Activated CD8-positive, alpha-beta T cell treated with anti-CD3 and anti-CD28 coated beads, Interleukin-2, amount 10 ng/mL, durations not matched to agents 7 days and 5 days (primary cell): ENCODE measurements at regions of chr9 and their contacts with region 1.

Region 1: GRCh38 chr9:98998441-98999151 is 54.9 kb downstream of the COL15A1 start:
- DNase-seq: peak; percentile 68
- ATAC-seq: peak; percentile 73
- H3K4me3 Mint-ChIP-seq: no peak overlapping the region
- H3K27ac Mint-ChIP-seq: no peak overlapping the region
- H3K4me1 Mint-ChIP-seq: peaks cover 35% of the 10 kb centered on the region
- H3K27me3 Mint-ChIP-seq: peaks cover 25% of the 10 kb centered on the region

Region 2: DNA sequence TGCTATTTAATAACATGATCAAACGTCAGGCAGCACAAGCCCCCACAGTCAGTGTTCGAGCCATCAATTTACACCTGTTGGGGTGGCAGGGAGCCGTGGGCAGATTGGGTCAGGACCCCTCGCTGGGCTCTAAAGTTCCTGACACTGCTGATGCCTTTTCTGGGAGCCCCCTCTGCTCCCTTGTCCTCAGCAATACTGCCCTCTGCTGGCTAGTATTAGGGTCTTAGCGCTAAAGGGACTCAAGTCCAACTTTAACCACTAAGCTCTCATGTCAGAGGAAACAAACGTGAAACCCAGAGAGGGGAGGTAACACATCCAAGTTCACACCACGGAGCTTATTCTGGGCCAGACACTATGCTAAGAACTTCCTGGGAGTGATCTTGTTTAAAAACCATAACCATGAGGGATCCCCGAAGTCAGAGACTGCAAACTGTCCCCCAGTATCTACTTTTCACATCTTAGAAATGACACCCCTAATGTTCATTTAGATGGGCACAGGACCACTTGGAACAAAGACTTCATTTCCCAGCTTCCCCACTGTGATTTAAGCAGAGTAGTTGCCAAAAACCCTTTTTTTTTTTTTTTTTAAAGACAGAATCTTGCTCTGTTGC is 222.7 kb before region 1 on chr9:
- CTCF ChIA-PET with region 1: no interaction called
- POLR2A ChIA-PET with region 1: no interaction called
- DNase-seq: peak; percentile 64
- ATAC-seq: peak; percentile 51
- H3K4me3 Mint-ChIP-seq: no peak overlapping the region
- H3K27ac Mint-ChIP-seq: peak overlapping the region; percentile 26
- H3K4me1 Mint-ChIP-seq: no peaks in the 10 kb centered on the region
- H3K27me3 Mint-ChIP-seq: no peaks in the 10 kb centered on the region

Region 3: GRCh38 chr9:98807070-98807810 is 191.4 kb before region 1 on chr9 and contains the start of gene GALNT12:
- CTCF ChIA-PET with region 1: interaction called, 22 read pairs
- POLR2A ChIA-PET with region 1: no interaction called
- DNase-seq: peak; percentile 64
- ATAC-seq: peak; percentile 83
- H3K4me3 Mint-ChIP-seq: peak within 1 kb of the TSS; percentile 82
- H3K27ac Mint-ChIP-seq: peak within 1 kb of the TSS; percentile 9
- H3K4me1 Mint-ChIP-seq: peaks cover 35% of the 10 kb centered on the region
- H3K27me3 Mint-ChIP-seq: peaks cover 28% of the 10 kb centered on the region
- total RNA-seq, gene GALNT12: 7.9 to 8.8 TPM

Region 4: GRCh38 chr9:98974994-98975712 is 23.4 kb before region 1 on chr9:
- CTCF ChIA-PET with region 1: interaction called, 21 read pairs
- POLR2A ChIA-PET with region 1: no interaction called
- DNase-seq: peak; percentile 87
- ATAC-seq: peak; percentile 96
- H3K4me3 Mint-ChIP-seq: peak overlapping the region; percentile 4
- H3K27ac Mint-ChIP-seq: no peak overlapping the region
- H3K4me1 Mint-ChIP-seq: peaks cover 16% of the 10 kb centered on the region
- H3K27me3 Mint-ChIP-seq: peaks cover 20% of the 10 kb centered on the region

Region 5: GRCh38 chr9:99057665-99058625 is 59.3 kb after region 1 on chr9:
- CTCF ChIA-PET with region 1: interaction called, 25 read pairs
- POLR2A ChIA-PET with region 1: no interaction called
- DNase-seq: peak; percentile 94
- ATAC-seq: peak; percentile 82
- H3K4me3 Mint-ChIP-seq: peak overlapping the region; percentile 78
- H3K27ac Mint-ChIP-seq: peak overlapping the region; percentile 98
- H3K4me1 Mint-ChIP-seq: peaks cover 82% of the 10 kb centered on the region
- H3K27me3 Mint-ChIP-seq: no peaks in the 10 kb centered on the region

Region 6: GRCh38 chr9:99104459-99105151 is 106.0 kb after region 1 on chr9 and contains the start of gene TGFBR1:
- CTCF ChIA-PET with region 1: interaction called, 80 read pairs
- POLR2A ChIA-PET with region 1: interaction called, 5 read pairs
- DNase-seq: peak; percentile 94
- ATAC-seq: peak; percentile 90
- H3K4me3 Mint-ChIP-seq: peak within 1 kb of the TSS; percentile 89
- H3K27ac Mint-ChIP-seq: peak within 1 kb of the TSS; percentile 92
- H3K4me1 Mint-ChIP-seq: peaks cover 76% of the 10 kb centered on the region
- H3K27me3 Mint-ChIP-seq: no peaks in the 10 kb centered on the region
- total RNA-seq, gene TGFBR1: 90.1 to 90.9 TPM

Region 7: DNA sequence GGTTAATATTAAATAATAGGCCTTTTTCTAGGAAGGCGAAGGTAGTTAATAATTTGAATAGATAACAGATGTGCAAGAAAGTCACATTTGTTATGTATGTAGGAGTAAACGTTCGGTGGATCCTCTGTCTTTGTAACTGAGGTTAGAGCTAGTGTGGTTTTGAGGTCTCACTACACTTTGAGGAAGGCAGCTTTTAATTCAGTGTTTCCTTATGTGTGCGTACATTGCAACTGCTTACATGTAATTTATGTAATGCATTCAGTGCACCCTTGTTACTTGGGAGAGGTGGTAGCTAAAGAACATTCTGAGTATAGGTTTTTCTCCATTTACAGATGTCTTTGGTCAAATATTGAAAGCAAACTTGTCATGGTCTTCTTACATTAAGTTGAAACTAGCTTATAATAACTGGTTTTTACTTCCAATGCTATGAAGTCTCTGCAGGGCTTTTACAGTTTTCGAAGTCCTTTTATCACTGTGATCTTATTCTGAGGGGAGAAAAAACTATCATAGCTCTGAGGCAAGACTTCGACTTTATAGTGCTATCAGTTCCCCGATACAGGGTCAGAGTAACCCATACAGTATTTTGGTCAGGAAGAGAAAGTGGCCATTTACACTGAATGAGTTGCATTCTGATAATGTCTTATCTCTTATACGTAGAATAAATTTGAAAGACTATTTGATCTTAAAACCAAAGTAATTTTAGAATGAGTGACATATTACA is 152.0 kb after region 1 on chr9:
- CTCF ChIA-PET with region 1: interaction called, 61 read pairs
- POLR2A ChIA-PET with region 1: no interaction called
- DNase-seq: peak; percentile 45
- ATAC-seq: peak; percentile 97
- H3K4me3 Mint-ChIP-seq: peak overlapping the region; percentile 32
- H3K27ac Mint-ChIP-seq: peak overlapping the region; percentile 70
- H3K4me1 Mint-ChIP-seq: peaks cover 58% of the 10 kb centered on the region
- H3K27me3 Mint-ChIP-seq: peaks cover 2% of the 10 kb centered on the region